ENCODE measurements at regions of chr4 and their contacts with region 1.

Region 1: DNA sequence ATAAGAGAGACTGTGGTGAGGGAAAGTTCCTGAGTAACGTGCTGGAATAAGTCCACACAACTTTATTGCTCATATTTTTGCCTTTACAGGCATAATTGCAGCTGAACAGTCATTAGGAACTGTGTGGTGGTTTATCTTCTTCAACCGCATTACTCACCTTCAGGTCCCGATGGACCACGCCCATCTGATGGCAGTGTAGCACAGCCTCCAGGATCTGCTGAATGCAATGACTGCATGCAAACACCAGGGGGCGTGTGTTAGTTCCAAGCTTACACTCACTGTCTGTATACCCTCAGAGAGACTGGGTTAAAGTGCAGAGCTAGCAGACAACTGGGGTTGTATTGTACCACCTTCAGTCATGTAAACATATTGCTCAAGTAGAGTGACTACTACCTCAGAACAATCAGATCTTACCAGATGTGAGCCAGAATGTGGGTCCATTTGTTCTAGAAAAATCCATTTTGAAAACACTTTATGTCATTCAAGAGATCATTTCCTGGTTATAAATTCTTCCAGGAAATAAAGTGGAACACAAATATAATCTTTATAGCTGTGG is 214.0 kb downstream of the CAMK2D start:
- DNase-seq: peak; percentile 67
- H3K4me3 ChIP-seq: no peak overlapping the region; a peak in 1 of 4 replicates
- H3K27ac ChIP-seq: peak overlapping the region in 1 of 2 experiments; percentile 25; a peak in 3 of 4 replicates
- H3K4me1 ChIP-seq: peaks cover 2 to 8% of the 10 kb centered on the region in 2 experiments; a peak in 3 of 4 replicates
- H3K27me3 ChIP-seq: no peaks in the 10 kb centered on the region
- CTCF ChIP-seq: peak; percentile 97
- EP300 ChIP-seq: no peak
- RAD21 ChIP-seq: peak; percentile 89

Region 2: DNA sequence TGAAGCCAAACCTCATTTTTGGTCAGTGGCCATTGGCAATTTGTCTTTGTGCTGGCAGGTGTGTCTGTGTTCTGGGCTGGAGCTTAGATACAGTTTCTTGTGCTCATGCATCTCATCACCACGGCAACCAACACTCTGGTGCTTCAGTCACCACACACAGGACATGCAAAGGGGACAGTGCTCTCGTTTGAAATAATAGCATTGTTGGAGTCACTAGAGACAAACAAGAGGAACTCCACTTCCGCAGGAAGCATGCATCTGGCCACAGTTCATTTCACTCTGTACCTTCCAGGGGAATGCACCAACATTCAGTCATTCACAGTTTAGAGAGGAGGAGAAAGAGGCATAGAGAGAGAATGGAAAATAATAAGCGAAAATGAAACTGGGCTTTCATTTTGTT is 230.7 kb before region 1 on chr4:
- CTCF ChIA-PET with region 1: no interaction called
- POLR2A ChIA-PET with region 1: no interaction called
- DNase-seq: peak; percentile 20
- H3K4me3 ChIP-seq: no peak overlapping the region
- H3K27ac ChIP-seq: no peak overlapping the region
- H3K4me1 ChIP-seq: no peaks in the 10 kb centered on the region; a peak in 1 of 4 replicates
- H3K27me3 ChIP-seq: no peaks in the 10 kb centered on the region
- CTCF ChIP-seq: no peak
- EP300 ChIP-seq: no peak
- RAD21 ChIP-seq: no peak

Region 3: GRCh38 chr4:113371111-113371510 is 176.5 kb before region 1 on chr4:
- CTCF ChIA-PET with region 1: no interaction called
- POLR2A ChIA-PET with region 1: no interaction called
- DNase-seq: no peak
- H3K4me3 ChIP-seq: no peak overlapping the region
- H3K27ac ChIP-seq: no peak overlapping the region
- H3K4me1 ChIP-seq: no peaks in the 10 kb centered on the region; a peak in 1 of 4 replicates
- H3K27me3 ChIP-seq: no peaks in the 10 kb centered on the region
- CTCF ChIP-seq: no peak
- EP300 ChIP-seq: no peak
- RAD21 ChIP-seq: no peak

Region 4: GRCh38 chr4:113394730-113395530 is 152.6 kb before region 1 on chr4:
- CTCF ChIA-PET with region 1: interaction called, 10 read pairs
- POLR2A ChIA-PET with region 1: no interaction called
- DNase-seq: peak; percentile 47
- H3K4me3 ChIP-seq: no peak overlapping the region; a peak in 1 of 4 replicates
- H3K27ac ChIP-seq: no peak overlapping the region
- H3K4me1 ChIP-seq: no peaks in the 10 kb centered on the region
- H3K27me3 ChIP-seq: no peaks in the 10 kb centered on the region
- CTCF ChIP-seq: peak; percentile 82
- EP300 ChIP-seq: peak in 1 of 2 experiments; percentile 75; a peak in 2 of 4 replicates
- RAD21 ChIP-seq: peak; percentile 99

Region 5: GRCh38 chr4:113534711-113535110 is 12.9 kb before region 1 on chr4:
- CTCF ChIA-PET with region 1: interaction called, 16 read pairs
- POLR2A ChIA-PET with region 1: no interaction called
- DNase-seq: no peak
- H3K4me3 ChIP-seq: no peak overlapping the region
- H3K27ac ChIP-seq: peak overlapping the region in 1 of 2 experiments; percentile 22; a peak in 2 of 4 replicates
- H3K4me1 ChIP-seq: peaks cover 0 to 18% of the 10 kb centered on the region in 2 experiments; a peak in 2 of 4 replicates
- H3K27me3 ChIP-seq: no peaks in the 10 kb centered on the region
- CTCF ChIP-seq: no peak
- EP300 ChIP-seq: no peak
- RAD21 ChIP-seq: no peak

Region 6: GRCh38 chr4:113673450-113673849 is 125.9 kb after region 1 on chr4:
- CTCF ChIA-PET with region 1: no interaction called
- POLR2A ChIA-PET with region 1: no interaction called
- DNase-seq: no peak
- H3K4me3 ChIP-seq: no peak overlapping the region
- H3K27ac ChIP-seq: no peak overlapping the region
- H3K4me1 ChIP-seq: peaks cover 6 to 23% of the 10 kb centered on the region in 2 experiments; a peak in 3 of 4 replicates
- H3K27me3 ChIP-seq: no peaks in the 10 kb centered on the region
- CTCF ChIP-seq: no peak
- EP300 ChIP-seq: no peak
- RAD21 ChIP-seq: no peak

Region 7: DNA sequence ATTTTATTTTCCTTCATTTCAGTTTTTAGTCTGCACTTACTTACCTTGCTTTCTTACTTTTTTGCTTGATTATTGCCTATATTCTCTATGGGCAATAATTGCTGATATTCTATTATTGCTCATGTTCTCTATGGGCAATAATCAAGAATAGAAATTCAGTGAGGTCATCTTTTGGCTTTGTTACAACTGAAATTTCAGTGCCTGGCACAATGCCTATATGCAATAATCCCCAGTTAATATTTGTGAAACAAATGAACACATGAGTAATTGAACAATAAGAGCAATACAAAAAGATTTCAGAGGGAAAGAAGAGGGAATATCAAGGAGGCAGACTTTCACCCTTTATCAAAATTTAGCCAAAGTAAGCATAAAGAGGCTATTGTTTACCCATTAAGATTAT is 480.5 kb after region 1 on chr4:
- CTCF ChIA-PET with region 1: no interaction called
- POLR2A ChIA-PET with region 1: no interaction called
- DNase-seq: no peak
- H3K4me3 ChIP-seq: no peak overlapping the region
- H3K27ac ChIP-seq: no peak overlapping the region; a peak in 1 of 4 replicates
- H3K4me1 ChIP-seq: no peaks in the 10 kb centered on the region; a peak in 1 of 4 replicates
- H3K27me3 ChIP-seq: no peaks in the 10 kb centered on the region
- CTCF ChIP-seq: no peak
- EP300 ChIP-seq: no peak
- RAD21 ChIP-seq: no peak

Measured in SK-N-SH (cell line).